Activated T-helper 2 cell treated with anti-CD3 and anti-CD28 coated beads, Interferon-gamma antibody, Interleukin-2, Interleukin-4, amounts not matched to agents 10 μg/mL and 5 μg/mL and 100 μg/mL, durations not matched to agents 14 hours and 24 hours and 36 hours (primary cell): ENCODE measurements at regions of chr13 and their contacts with region 1.

Region 1: DNA sequence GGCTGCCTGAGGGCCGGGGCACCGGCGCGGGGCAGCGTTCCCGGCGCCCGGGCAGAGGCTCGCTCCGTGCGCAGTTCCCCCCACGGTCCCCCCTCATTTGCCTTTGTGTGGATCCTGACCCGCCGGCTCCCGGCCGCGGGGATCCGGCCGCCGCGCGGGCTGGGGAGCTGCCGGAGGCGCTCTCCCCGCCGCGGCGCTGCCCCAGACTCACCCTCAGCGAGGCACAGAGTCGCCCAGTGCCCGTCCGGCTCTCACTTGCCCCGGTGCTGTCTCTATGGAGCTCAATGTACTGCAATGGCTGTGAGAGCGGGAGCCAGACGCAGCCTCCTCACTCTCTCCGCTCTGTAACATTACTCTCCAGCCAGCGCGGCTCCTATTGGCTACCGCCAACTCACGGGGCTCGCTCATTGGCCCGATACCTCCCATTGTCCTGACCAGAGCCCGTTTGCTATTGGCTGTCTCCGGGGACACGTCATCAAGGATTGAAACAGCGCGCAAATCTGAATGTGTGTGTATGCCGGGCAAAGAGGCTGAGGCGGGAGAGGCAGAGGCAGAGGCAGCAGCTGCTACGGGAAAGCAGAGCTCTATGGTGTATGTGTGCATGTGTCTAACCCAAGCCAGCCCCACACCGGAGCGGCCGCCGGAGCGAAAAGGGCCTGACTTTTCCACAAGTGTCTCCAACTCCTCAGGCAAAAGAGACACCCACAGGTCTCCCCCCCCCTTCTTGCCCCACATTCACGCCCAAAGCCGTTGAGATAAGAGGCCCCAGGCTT is at the start of gene HMGB1:
- DNase-seq: peak; percentile 98
- H3K4me3 Mint-ChIP-seq: peak within 1 kb of the TSS; percentile 94
- H3K27ac Mint-ChIP-seq: peak within 1 kb of the TSS; percentile 100
- H3K4me1 Mint-ChIP-seq: peaks cover 26% of the 10 kb centered on the region
- H3K27me3 Mint-ChIP-seq: no peaks in the 10 kb centered on the region
- total RNA-seq, gene HMGB1: 594 and 603 TPM in 2 replicates

Region 2: DNA sequence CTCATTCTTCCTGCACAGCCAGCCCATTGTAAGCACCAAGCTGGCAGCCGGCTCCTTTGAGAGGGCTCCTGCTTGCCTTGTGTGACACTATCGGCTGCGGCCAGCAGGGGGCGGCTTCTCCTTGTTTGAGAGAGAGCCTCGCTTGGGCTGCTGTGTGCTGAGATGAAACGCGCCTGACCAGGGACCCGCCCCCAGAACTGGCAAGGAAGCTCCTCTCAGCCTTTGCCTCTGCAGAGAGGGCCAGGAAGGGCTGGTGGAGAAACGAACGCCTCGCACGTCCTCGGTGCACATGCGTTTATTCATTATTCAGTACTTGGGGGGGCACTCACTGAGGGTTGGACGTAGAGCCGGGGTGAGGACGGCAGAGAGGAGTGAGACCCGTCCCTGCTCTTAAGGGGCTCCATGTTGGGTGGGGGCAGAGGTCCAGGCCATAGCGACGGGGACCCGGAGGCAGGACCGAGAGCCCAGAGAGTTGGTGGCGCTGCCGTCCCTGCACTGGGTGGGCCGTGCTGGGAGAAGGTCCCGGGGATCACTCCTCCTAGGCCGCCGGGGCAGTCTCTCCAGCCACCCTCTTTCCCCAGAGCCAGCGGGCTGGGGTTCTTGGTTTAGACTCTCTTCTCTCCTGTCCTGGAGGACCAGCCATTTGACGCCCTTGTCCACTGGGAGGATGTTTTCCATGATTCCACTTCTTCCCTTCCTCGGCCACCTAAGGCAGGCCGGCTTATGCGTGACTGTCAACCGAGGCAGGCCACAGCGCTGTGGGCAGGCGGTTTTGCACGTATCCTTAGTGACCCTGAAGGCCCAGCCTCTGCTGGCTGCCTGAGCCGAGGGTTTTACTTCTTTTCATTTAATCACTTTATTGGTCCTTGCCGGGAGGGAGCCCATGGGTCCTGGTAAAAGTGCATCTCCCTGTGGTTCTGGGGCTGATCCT is 332.9 kb before region 1 on chr13:
- intact Hi-C with region 1: loop called (anchors 5 kb)
- DNase-seq: peak; percentile 93
- H3K4me3 Mint-ChIP-seq: no peak overlapping the region
- H3K27ac Mint-ChIP-seq: peak overlapping the region; percentile 43
- H3K4me1 Mint-ChIP-seq: peaks cover 22% of the 10 kb centered on the region
- H3K27me3 Mint-ChIP-seq: no peaks in the 10 kb centered on the region

Region 3: DNA sequence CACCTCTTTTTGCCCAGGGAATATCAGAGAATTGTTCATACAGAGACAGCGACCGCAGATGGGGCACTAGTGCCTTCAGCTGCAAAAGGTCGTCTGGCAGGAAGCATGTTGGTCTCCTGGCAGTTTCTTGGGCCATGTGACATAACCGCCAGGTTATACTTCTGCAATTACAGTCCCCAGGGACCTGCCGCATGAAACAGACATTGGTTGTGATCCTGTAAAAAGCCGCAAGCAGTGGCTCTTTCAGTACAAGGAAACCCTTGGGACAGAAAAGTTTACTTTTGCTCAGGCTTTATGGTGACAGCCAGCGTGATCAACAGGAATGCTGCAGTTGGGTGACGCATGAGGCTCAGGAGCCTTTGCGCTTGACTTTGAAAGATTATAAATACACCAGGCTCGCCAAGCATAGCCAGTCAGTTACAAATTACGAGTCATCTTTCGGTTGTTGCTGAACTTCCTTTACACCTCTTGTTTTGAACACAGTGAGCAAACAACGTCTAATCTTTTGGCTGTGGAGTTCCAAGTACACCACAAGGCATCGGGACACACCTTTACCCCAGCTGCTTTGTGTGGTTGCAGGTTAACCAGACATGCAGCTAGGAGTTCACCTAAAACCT is 94.0 kb before region 1 on chr13:
- intact Hi-C with region 1: loop called (anchors 2 kb)
- DNase-seq: peak; percentile 60
- H3K4me3 Mint-ChIP-seq: peak overlapping the region; percentile 56
- H3K27ac Mint-ChIP-seq: peak overlapping the region; percentile 98
- H3K4me1 Mint-ChIP-seq: peaks cover 71% of the 10 kb centered on the region
- H3K27me3 Mint-ChIP-seq: no peaks in the 10 kb centered on the region

Region 4: DNA sequence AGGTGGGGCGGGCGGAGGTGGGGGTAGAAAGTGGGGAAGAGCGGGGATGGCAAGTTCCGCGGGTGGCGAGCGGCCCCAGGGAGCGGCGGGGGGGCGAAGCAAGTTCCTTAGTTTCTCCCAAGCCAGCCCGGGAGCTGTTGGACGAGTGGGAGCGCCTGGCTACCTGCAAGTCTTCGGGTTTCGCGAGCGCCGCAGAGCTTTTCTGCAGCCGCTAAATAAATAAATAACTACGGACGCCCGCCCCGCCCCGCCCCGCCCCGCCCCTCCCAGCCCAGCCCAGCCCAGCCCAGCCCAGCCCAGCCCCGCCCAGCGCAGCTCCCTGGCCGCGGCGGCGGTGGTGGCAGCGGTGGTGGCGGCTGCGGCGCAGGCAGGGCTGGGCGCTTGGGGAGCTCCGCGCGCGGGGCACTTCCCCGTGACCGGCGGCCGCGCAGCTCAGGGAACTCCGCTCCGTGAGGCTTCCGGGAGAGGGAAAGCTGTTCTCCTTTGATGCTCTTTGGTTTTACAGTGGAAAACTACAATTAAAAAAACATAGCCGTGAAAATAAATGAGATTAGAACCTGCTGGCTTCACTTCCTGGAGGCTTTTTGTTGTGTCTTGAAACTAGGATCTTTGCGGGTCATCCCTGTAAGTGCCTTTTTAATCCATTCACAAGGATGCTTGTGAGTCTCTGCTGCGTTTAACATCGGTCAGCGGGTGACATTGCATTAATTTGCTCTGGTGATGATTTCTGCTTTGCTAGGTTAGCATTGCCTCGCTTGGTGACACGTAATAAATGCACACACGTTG is 43.5 kb before region 1 on chr13 and contains the start of gene UBE2L5:
- intact Hi-C with region 1: loop called (anchors 5 kb)
- DNase-seq: peak; percentile 73
- H3K4me3 Mint-ChIP-seq: peak within 1 kb of the TSS; percentile 86
- H3K27ac Mint-ChIP-seq: peak within 1 kb of the TSS; percentile 76
- H3K4me1 Mint-ChIP-seq: peaks cover 14% of the 10 kb centered on the region
- H3K27me3 Mint-ChIP-seq: no peaks in the 10 kb centered on the region
- total RNA-seq, gene UBE2L5: not detected in 2 replicates

Region 5: DNA sequence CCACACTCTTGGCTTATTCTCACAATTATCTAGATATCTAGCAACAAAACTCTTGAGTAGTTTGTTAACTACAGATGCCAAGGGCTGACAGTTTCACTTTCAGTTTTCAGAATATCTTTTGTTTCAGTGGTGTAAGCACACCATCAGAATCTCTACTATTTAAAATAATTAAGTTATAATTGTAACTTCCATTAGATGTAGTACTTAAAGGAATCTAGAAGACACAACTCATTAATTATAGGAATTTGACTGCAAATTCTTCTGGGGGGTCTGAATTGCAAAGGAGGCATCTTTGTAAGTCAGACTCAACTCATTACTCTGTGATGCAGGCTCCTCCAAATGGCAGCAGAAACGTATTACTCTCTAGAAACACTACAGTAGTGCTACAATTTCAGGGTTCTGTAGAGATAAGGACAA is 107.1 kb after region 1 on chr13:
- intact Hi-C with region 1: loop called (anchors 2 kb)
- DNase-seq: no peak
- H3K4me3 Mint-ChIP-seq: peak overlapping the region; percentile 62
- H3K27ac Mint-ChIP-seq: peak overlapping the region; percentile 18
- H3K4me1 Mint-ChIP-seq: peaks cover 54% of the 10 kb centered on the region
- H3K27me3 Mint-ChIP-seq: peaks cover 2% of the 10 kb centered on the region

Region 6: GRCh38 chr13:30802953-30803478 is 337.2 kb after region 1 on chr13:
- intact Hi-C with region 1: loop called (anchors 5 kb)
- DNase-seq: peak; percentile 76
- H3K4me3 Mint-ChIP-seq: peak overlapping the region; percentile 18
- H3K27ac Mint-ChIP-seq: no peak overlapping the region
- H3K4me1 Mint-ChIP-seq: peaks cover 10% of the 10 kb centered on the region
- H3K27me3 Mint-ChIP-seq: no peaks in the 10 kb centered on the region